GM23248 (cell line): ENCODE measurements at regions of chr12 and their contacts with region 1.

Region 1: GRCh38 chr12:13211859-13212664 is 15.5 kb downstream of the EMP1 start:
- DNase-seq: peak; percentile 80
- H3K4me3 ChIP-seq: no peak overlapping the region
- H3K27ac ChIP-seq: peak overlapping the region; percentile 100
- H3K4me1 ChIP-seq: peaks cover 72% of the 10 kb centered on the region
- H3K27me3 ChIP-seq: no peaks in the 10 kb centered on the region

Region 2: DNA sequence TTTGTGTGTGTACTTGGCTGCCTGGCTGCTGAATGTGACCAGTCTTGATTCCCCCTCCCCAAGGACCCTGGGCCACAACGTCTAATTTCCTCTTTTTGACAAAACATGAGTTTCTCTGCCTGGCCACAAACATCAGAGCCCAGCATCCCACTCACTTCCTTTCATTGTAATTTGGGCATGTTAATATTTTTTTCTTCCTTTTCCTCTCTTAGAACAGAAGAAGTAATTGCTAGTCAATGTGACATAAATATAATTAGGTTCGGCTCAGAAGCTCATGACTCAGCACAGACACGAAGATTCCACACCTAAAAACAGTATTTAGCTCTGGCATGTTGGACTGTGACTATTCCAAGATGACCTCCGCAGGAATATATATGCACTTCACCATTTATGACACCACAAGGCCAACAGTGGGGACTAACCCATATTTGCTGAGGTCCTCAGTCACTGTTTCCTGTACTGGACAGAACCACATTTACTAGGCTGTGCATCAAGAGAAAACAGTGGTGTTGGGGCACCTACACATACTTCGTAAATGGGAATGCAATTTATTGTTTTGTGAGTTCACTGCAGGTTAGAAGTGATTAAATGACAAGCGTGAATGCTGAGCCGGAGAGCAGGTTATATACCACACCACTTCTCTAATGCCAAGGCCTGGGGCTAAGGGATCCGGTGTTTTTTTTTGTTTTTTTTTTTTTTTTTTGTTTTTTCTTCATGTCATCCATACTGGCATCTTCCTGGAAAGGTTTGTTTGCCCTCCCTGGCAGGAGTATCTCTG is 112.8 kb before region 1 on chr12:
- in situ Hi-C with region 1: loop called (anchors 5 kb)
- DNase-seq: peak; percentile 73
- H3K4me3 ChIP-seq: peak overlapping the region; percentile 43
- H3K27ac ChIP-seq: peak overlapping the region; percentile 98
- H3K4me1 ChIP-seq: peaks cover 71% of the 10 kb centered on the region
- H3K27me3 ChIP-seq: no peaks in the 10 kb centered on the region

Region 3: GRCh38 chr12:14175206-14175605 is 963.1 kb after region 1 on chr12:
- in situ Hi-C with region 1: no loop called
- DNase-seq: no peak
- H3K4me3 ChIP-seq: no peak overlapping the region
- H3K27ac ChIP-seq: no peak overlapping the region
- H3K4me1 ChIP-seq: no peaks in the 10 kb centered on the region
- H3K27me3 ChIP-seq: no peaks in the 10 kb centered on the region